ENCODE measurements at regions of chr18 and their contacts with region 1.

Region 1: DNA sequence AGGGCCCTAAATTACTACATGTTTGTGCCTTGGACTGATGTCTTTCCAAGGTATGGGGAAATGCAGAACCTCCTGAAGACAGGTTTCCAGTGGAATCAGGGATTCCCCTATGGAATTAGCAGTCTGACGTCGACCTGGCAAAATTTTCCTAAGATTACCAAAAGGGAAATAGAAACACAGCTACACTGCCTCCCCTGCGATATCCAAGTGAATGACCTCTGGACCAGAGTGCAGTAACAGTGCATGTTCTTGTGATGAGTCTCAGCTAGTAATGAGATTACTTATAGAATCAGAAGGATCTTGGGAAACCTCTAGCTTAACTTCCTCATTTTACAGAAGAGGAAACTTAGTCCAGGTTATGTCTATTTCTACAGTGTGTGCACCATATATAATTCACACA is 21.3 kb upstream of the CHST9 start:
- DNase-seq: no peak
- ATAC-seq: no peak
- H3K4me3 ChIP-seq: no peak overlapping the region
- H3K27ac ChIP-seq: no peak overlapping the region
- H3K4me1 ChIP-seq: no peaks in the 10 kb centered on the region
- H3K27me3 ChIP-seq: no peaks in the 10 kb centered on the region
- CTCF ChIP-seq: no peak

Region 2: GRCh38 chr18:26176134-26176533 is 1030.3 kb before region 1 on chr18:
- intact Hi-C with region 1: loop called in 1 of 10 experiments (anchors 5 kb)
- DNase-seq: no peak
- ATAC-seq: no peak
- H3K4me3 ChIP-seq: no peak overlapping the region
- H3K27ac ChIP-seq: no peak overlapping the region
- H3K4me1 ChIP-seq: no peaks in the 10 kb centered on the region
- H3K27me3 ChIP-seq: no peaks in the 10 kb centered on the region
- CTCF ChIP-seq: no peak

Measured in heart right ventricle (tissue), 16 donors.